Activated T-helper 1 cell treated with anti-CD3 and anti-CD28 coated beads, Interleukin-12 subunit alpha, Interleukin-12 subunit beta, Interleukin-2, Interleukin-4 antibody, amounts not matched to agents 30 ng/mL and 10 ng/mL and 1 ng/mL, durations not matched to agents 14 hours and 24 hours and 36 hours (primary cell): ENCODE measurements at regions of chr16 and their contacts with region 1.

Region 1: GRCh38 chr16:47110939-47111338 is 32.8 kb downstream of the NETO2 start:
- DNase-seq: no peak
- H3K4me3 Mint-ChIP-seq: no peak overlapping the region
- H3K27ac Mint-ChIP-seq: no peak overlapping the region
- H3K4me1 Mint-ChIP-seq: peaks cover 20% of the 10 kb centered on the region
- H3K27me3 Mint-ChIP-seq: no peaks in the 10 kb centered on the region

Region 2: DNA sequence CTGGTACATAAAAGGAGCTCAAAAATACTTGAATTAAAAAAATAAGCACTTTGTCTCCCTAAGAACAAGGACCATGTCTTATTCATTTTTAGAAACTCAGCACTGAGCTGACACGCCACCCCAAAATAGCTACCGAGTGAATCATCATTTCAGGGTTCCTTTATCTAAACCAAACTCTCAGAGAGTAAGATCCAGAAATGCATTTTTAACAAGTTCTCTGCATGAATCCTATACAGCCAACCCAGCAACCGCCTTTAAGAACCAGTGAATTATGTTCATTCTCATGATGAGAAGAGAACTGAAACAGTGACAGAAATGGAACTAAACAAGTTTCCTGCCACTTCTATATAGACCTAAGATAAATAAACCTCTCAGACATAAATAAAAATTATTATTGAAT is 288.7 kb before region 1 on chr16:
- intact Hi-C with region 1: loop called (anchors 5 kb)
- DNase-seq: no peak
- H3K4me3 Mint-ChIP-seq: no peak overlapping the region
- H3K27ac Mint-ChIP-seq: no peak overlapping the region
- H3K4me1 Mint-ChIP-seq: peaks cover 34% of the 10 kb centered on the region
- H3K27me3 Mint-ChIP-seq: no peaks in the 10 kb centered on the region

Region 3: GRCh38 chr16:47073223-47074155 is 37.5 kb before region 1 on chr16:
- intact Hi-C with region 1: loop called (anchors 5 kb)
- DNase-seq: no peak
- H3K4me3 Mint-ChIP-seq: no peak overlapping the region
- H3K27ac Mint-ChIP-seq: no peak overlapping the region
- H3K4me1 Mint-ChIP-seq: peaks cover 31% of the 10 kb centered on the region
- H3K27me3 Mint-ChIP-seq: no peaks in the 10 kb centered on the region